ENCODE measurements at regions of chr15 and their contacts with region 1.

Region 1: GRCh38 chr15:52481915-52482314 is 46.8 kb downstream of the MYO5A start:
- DNase-seq: peak in 13 of 14 experiments; percentile 23 to 94 (median 42)
- ATAC-seq: peak; percentile 98
- H3K4me3 ChIP-seq: no peak overlapping the region
- H3K4me3 Mint-ChIP-seq: peak overlapping the region; percentile 6
- H3K27ac ChIP-seq: peak overlapping the region in 1 of 2 donors; percentile 43
- H3K27ac Mint-ChIP-seq: peak overlapping the region; percentile 70
- H3K4me1 ChIP-seq: peaks cover 56% of the 10 kb centered on the region
- H3K4me1 Mint-ChIP-seq: peaks cover 71% of the 10 kb centered on the region
- H3K27me3 ChIP-seq: no peaks in the 10 kb centered on the region
- H3K27me3 Mint-ChIP-seq: no peaks in the 10 kb centered on the region
- CTCF ChIP-seq: no peak

Region 2: DNA sequence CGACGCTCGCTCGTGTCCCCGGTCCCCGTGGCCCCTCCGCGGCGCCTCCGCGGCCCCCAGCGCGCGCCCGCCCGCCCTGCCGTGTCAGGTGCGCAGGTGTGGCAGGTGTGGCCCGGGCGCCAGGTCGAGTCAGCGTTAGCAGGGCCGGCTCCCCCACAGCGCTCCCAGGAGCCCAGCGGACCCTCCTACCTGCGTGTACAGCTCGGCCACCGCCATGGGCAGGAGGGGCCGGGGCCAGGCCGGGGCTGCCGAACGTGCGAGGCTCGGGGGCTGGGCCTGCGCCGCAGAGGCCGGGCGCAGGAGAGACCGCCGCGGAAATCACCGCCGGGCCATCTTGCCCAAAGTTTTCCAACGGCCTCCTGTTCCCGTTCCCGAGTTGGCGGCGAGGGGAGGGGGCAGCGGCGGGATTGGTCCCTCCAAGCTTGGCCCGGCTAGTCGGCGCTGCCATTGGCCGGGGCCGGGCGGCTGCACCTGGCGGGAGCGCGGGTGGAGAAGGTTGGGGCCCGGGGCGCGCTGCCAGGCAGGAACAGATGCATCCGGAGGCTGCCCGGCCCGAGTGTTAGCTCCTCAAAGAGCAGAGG is 186.4 kb before region 1 on chr15 and contains the start of gene MYO5C:
- CTCF ChIA-PET with region 1: no interaction called
- POLR2A ChIA-PET with region 1: no interaction called
- intact Hi-C with region 1: no loop called
- DNase-seq: peak in 1 of 14 experiments; percentile 10
- ATAC-seq: no peak
- H3K4me3 ChIP-seq: no peak within 1 kb of the TSS
- H3K4me3 Mint-ChIP-seq: peak within 1 kb of the TSS; percentile 55
- H3K27ac ChIP-seq: no peak within 1 kb of the TSS
- H3K27ac Mint-ChIP-seq: no peak within 1 kb of the TSS
- H3K4me1 ChIP-seq: peaks cover 12% of the 10 kb centered on the region
- H3K4me1 Mint-ChIP-seq: no peaks in the 10 kb centered on the region
- H3K27me3 ChIP-seq: peaks cover 8 to 41% of the 10 kb centered on the region in 2 experiments
- H3K27me3 Mint-ChIP-seq: peaks cover 48% of the 10 kb centered on the region
- CTCF ChIP-seq: no peak
- total RNA-seq, gene MYO5C: 0.53 to 0.93 TPM

Region 3: DNA sequence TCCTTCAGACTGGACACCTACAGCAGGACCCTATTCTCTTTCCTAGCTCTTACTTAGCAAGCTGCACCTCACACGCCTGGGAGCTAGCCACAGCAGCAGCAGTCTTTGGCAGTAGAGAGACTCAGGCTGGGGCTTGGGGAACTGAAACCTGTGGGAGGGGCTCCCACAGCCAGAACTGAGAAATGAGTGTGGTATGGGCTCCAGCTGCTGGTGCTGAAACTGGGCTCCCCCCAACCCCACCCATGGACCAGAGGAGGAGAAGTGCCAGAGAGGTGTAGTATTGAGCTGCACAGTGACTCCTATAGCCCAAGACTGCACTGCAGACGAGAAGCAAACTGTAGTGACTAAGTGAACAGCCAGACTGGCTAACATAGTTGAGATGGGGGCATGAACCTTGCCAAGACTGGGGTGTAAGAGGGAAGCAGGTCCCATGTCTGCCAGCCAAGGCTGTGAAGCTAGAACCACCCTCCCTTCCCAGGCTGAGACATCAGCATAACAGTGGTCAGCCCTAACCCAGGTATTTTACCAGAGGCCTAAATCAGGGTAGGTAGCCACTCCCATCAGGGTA is 15.7 kb before region 1 on chr15:
- CTCF ChIA-PET with region 1: interaction called, 4 read pairs
- POLR2A ChIA-PET with region 1: interaction called, 11 read pairs
- intact Hi-C with region 1: no loop called
- DNase-seq: peak in 4 of 14 experiments; percentile 4 to 72 (median 50)
- ATAC-seq: peak; percentile 55
- H3K4me3 ChIP-seq: no peak overlapping the region
- H3K4me3 Mint-ChIP-seq: no peak overlapping the region
- H3K27ac ChIP-seq: peak overlapping the region in 1 of 2 donors; percentile 38
- H3K27ac Mint-ChIP-seq: peak overlapping the region; percentile 77
- H3K4me1 ChIP-seq: peaks cover 29% of the 10 kb centered on the region
- H3K4me1 Mint-ChIP-seq: peaks cover 52% of the 10 kb centered on the region
- H3K27me3 ChIP-seq: no peaks in the 10 kb centered on the region
- H3K27me3 Mint-ChIP-seq: no peaks in the 10 kb centered on the region
- CTCF ChIP-seq: no peak

Region 4: GRCh38 chr15:52496776-52497470 is 15.0 kb after region 1 on chr15:
- CTCF ChIA-PET with region 1: no interaction called
- POLR2A ChIA-PET with region 1: no interaction called
- intact Hi-C with region 1: loop called in 1 of 2 experiments (anchors 1 kb)
- DNase-seq: peak in 2 of 14 experiments; percentile 28 to 37
- ATAC-seq: no peak
- H3K4me3 ChIP-seq: no peak overlapping the region
- H3K4me3 Mint-ChIP-seq: no peak overlapping the region
- H3K27ac ChIP-seq: no peak overlapping the region
- H3K27ac Mint-ChIP-seq: no peak overlapping the region
- H3K4me1 ChIP-seq: peaks cover 7% of the 10 kb centered on the region
- H3K4me1 Mint-ChIP-seq: peaks cover 37% of the 10 kb centered on the region
- H3K27me3 ChIP-seq: no peaks in the 10 kb centered on the region
- H3K27me3 Mint-ChIP-seq: no peaks in the 10 kb centered on the region
- CTCF ChIP-seq: no peak

Region 5: GRCh38 chr15:52523192-52523591 is 41.3 kb after region 1 on chr15:
- CTCF ChIA-PET with region 1: no interaction called
- POLR2A ChIA-PET with region 1: interaction called, 23 read pairs
- intact Hi-C with region 1: loop called (anchors 2 to 5 kb)
- DNase-seq: no peak
- ATAC-seq: no peak
- H3K4me3 ChIP-seq: no peak overlapping the region
- H3K4me3 Mint-ChIP-seq: no peak overlapping the region
- H3K27ac ChIP-seq: no peak overlapping the region
- H3K27ac Mint-ChIP-seq: no peak overlapping the region
- H3K4me1 ChIP-seq: peaks cover 12% of the 10 kb centered on the region
- H3K4me1 Mint-ChIP-seq: peaks cover 56% of the 10 kb centered on the region
- H3K27me3 ChIP-seq: no peaks in the 10 kb centered on the region
- H3K27me3 Mint-ChIP-seq: no peaks in the 10 kb centered on the region
- CTCF ChIP-seq: no peak

Region 6: DNA sequence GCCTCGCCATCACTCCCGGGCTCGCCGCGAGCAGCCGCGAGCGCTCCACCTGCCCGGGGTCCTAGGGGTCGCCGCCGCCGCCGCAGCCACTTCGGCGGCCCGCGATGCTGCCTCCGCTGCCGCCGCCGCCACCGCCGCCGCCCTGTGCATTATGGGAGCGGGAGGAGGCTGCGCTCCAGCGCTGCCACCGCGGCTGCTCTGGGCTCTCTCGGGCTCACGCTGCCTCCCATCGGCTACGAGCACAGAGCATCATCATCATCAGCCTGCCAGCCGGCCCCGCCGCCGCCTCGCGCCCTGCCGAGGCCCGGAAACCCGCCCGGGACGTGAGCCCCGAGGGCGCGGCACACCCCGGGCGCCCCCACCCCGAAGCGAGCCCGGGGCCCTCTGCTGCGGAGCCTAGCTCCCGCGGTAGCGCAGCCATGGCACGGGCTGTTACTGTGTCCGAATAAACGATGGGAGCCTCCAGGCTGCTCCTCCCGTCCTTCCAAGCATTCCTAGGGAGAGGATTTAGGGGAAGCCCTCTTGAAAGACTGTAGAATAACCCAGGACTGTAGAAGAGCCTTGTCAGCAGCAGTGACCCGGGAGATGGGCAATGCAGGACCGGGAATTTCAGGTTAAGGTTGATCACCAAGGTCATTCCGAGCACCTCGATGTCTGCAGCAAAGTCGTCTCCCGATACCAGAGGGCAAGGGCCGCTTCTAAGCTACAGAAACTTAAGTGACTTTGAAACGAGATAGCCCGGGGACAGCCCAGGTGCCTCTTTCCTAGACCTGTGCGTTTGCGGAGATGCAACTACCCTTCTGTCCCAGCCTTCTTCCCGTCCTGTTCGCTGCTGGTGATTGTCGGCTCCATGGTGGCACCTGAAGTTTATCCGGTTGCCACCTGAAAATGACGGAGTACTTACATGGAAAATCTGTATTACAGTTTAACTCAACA is 47.3 kb after region 1 on chr15:
- CTCF ChIA-PET with region 1: no interaction called
- POLR2A ChIA-PET with region 1: interaction called, 23 read pairs
- intact Hi-C with region 1: loop called (anchors 2 to 5 kb)
- DNase-seq: peak; percentile 64 to 94 (median 78)
- ATAC-seq: peak; percentile 87
- H3K4me3 ChIP-seq: peak overlapping the region; percentile 75
- H3K4me3 Mint-ChIP-seq: peak overlapping the region; percentile 89
- H3K27ac ChIP-seq: peak overlapping the region; percentile 64 to 88
- H3K27ac Mint-ChIP-seq: peak overlapping the region; percentile 84
- H3K4me1 ChIP-seq: peaks cover 22% of the 10 kb centered on the region
- H3K4me1 Mint-ChIP-seq: peaks cover 32% of the 10 kb centered on the region
- H3K27me3 ChIP-seq: no peaks in the 10 kb centered on the region
- H3K27me3 Mint-ChIP-seq: no peaks in the 10 kb centered on the region
- CTCF ChIP-seq: peak; percentile 15

Region 7: DNA sequence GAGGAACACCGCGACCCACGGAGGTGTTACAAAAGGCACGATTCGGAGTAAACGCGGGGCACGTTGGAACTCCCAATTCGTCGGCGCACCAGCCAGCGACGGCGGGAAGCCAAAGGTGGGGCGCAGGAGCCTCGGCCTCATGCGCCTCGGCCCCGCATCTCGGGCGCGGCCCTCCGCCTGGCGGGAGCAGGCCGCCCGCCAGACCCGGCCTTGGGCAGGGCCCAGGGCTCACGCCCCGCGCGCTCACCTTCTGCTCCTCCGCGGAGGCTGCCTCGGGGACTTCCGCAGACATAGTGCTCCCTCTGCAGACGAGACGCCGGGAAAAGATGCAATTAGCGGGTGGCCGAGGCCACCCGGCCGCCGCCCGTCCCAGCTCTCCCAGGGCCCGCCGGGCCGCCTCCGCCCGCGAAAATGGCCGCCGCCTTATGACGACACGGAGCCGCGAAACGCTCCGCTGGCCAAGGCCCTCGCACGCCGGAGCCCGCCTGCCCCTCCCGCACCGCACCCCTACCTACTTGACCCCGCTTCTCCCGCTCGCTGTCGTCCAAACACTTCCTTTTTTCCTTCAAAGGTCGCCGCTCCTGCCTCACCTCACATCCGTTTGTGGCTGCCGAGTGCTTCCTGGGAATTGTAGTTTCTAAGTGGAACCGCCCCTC is 86.8 kb after region 1 on chr15 and contains the start of gene ARPP19:
- CTCF ChIA-PET with region 1: no interaction called
- POLR2A ChIA-PET with region 1: interaction called, 4 read pairs
- intact Hi-C with region 1: loop called in 1 of 2 experiments (anchors 5 kb)
- DNase-seq: peak; percentile 60 to 93 (median 71)
- ATAC-seq: peak; percentile 72
- H3K4me3 ChIP-seq: peak within 1 kb of the TSS; percentile 75
- H3K4me3 Mint-ChIP-seq: peak within 1 kb of the TSS; percentile 99
- H3K27ac ChIP-seq: peak within 1 kb of the TSS; percentile 91 to 93
- H3K27ac Mint-ChIP-seq: peak within 1 kb of the TSS; percentile 98
- H3K4me1 ChIP-seq: peaks cover 35% of the 10 kb centered on the region
- H3K4me1 Mint-ChIP-seq: peaks cover 45% of the 10 kb centered on the region
- H3K27me3 ChIP-seq: no peaks in the 10 kb centered on the region
- H3K27me3 Mint-ChIP-seq: no peaks in the 10 kb centered on the region
- CTCF ChIP-seq: peak; percentile 24
- total RNA-seq, gene ARPP19: 134 to 146 TPM